A549 (cell line): ENCODE measurements at regions of chr3 and their contacts with region 1.

Region 1: DNA sequence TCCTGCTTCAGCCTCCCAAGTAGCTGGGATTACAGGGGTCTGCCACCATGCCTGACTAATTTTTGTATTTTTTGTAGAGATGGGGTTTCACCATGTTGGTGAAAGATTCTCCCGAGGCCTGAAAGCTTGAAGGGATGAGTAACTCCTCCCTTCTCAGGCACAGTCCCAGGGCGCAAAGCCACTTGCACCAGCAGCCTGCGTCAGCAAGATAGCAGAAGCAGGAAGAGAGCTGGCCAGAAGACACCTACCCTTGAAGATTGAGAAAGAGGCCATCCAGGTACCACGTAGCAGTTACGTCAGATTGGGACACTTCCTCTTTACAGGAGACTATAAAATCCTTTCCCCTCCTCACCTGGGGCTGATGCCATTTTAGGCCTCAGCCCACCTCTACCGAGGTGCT is 8.5 kb upstream of the MOBP start:
- DNase-seq: no peak
- ATAC-seq: no peak
- H3K4me3 ChIP-seq: no peak overlapping the region
- H3K27ac ChIP-seq: no peak overlapping the region
- H3K4me1 ChIP-seq: no peaks in the 10 kb centered on the region
- CTCF ChIP-seq: no peak
- EP300 ChIP-seq: no peak
- POLR2A ChIP-seq: no peak
- RAD21 ChIP-seq: no peak

Region 2: GRCh38 chr3:38264353-38264771 is 1194.7 kb before region 1 on chr3:
- CTCF ChIA-PET with region 1: no interaction called
- POLR2A ChIA-PET with region 1: no interaction called
- DNase-seq: no peak
- ATAC-seq: peak; percentile 27 to 47; a peak in 3 of 6 replicates
- H3K4me3 ChIP-seq: no peak overlapping the region
- H3K27ac ChIP-seq: no peak overlapping the region
- H3K4me1 ChIP-seq: no peaks in the 10 kb centered on the region
- CTCF ChIP-seq: no peak
- EP300 ChIP-seq: no peak
- POLR2A ChIP-seq: no peak
- RAD21 ChIP-seq: no peak

Region 3: GRCh38 chr3:39447637-39448483 is 11.2 kb before region 1 on chr3:
- CTCF ChIA-PET with region 1: interaction called, 12 read pairs
- POLR2A ChIA-PET with region 1: no interaction called
- DNase-seq: peak; percentile 81 to 88
- ATAC-seq: peak; percentile 93 to 98
- H3K4me3 ChIP-seq: no peak overlapping the region
- H3K27ac ChIP-seq: no peak overlapping the region
- H3K4me1 ChIP-seq: no peaks in the 10 kb centered on the region
- CTCF ChIP-seq: peak; percentile 87
- EP300 ChIP-seq: no peak
- POLR2A ChIP-seq: no peak
- RAD21 ChIP-seq: peak; percentile 74 to 81

Region 4: GRCh38 chr3:39485547-39485946 is 26.5 kb after region 1 on chr3:
- CTCF ChIA-PET with region 1: no interaction called
- POLR2A ChIA-PET with region 1: no interaction called
- DNase-seq: no peak
- ATAC-seq: no peak
- H3K4me3 ChIP-seq: no peak overlapping the region
- H3K27ac ChIP-seq: no peak overlapping the region
- H3K4me1 ChIP-seq: no peaks in the 10 kb centered on the region
- CTCF ChIP-seq: no peak
- EP300 ChIP-seq: no peak
- POLR2A ChIP-seq: no peak
- RAD21 ChIP-seq: no peak

Region 5: GRCh38 chr3:39541917-39542329 is 82.9 kb after region 1 on chr3:
- CTCF ChIA-PET with region 1: no interaction called
- POLR2A ChIA-PET with region 1: no interaction called
- DNase-seq: peak; percentile 12 to 13
- ATAC-seq: peak in 1 of 2 experiments; percentile 43; a peak in 1 of 6 replicates
- H3K4me3 ChIP-seq: no peak overlapping the region
- H3K27ac ChIP-seq: no peak overlapping the region
- H3K4me1 ChIP-seq: no peaks in the 10 kb centered on the region
- CTCF ChIP-seq: peak; percentile 77
- EP300 ChIP-seq: no peak
- POLR2A ChIP-seq: no peak
- RAD21 ChIP-seq: peak; percentile 75 to 78